ENCODE measurements at regions of chr2 and their contacts with region 1.

Region 1: GRCh38 chr2:72271766-72272641 is 124.3 kb upstream of the CYP26B1 start:
- DNase-seq: peak; percentile 41
- H3K4me3 Mint-ChIP-seq: no peak overlapping the region
- H3K27ac Mint-ChIP-seq: peak overlapping the region; percentile 30
- H3K4me1 Mint-ChIP-seq: peaks cover 50% of the 10 kb centered on the region
- H3K27me3 Mint-ChIP-seq: no peaks in the 10 kb centered on the region
- CTCF ChIP-seq: no peak

Region 2: GRCh38 chr2:72367530-72368225 is 95.7 kb after region 1 on chr2:
- CTCF ChIA-PET with region 1: no interaction called
- intact Hi-C with region 1: loop called (anchors 1 kb)
- DNase-seq: peak; percentile 77
- H3K4me3 Mint-ChIP-seq: no peak overlapping the region
- H3K27ac Mint-ChIP-seq: no peak overlapping the region
- H3K4me1 Mint-ChIP-seq: no peaks in the 10 kb centered on the region
- H3K27me3 Mint-ChIP-seq: no peaks in the 10 kb centered on the region
- CTCF ChIP-seq: peak; percentile 26

Region 3: DNA sequence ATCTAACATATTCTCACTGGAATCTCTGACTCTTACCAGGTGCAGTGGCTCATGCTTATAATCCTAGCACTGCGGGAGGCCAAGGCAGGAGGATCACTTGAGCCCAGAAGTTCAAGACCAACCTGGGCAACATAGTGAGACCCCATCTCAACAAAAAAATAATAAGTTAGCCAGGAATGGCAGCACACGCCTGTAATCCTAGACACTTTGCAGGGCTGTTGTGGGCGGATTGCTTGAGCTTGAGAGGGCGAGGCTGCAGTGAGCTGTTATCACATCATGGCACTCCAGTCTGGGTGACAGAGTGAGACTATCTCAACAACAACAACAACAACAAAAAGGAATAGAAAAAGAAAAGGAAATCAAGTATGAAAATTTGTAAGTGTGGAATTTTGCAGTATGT is 182.2 kb after region 1 on chr2:
- CTCF ChIA-PET with region 1: no interaction called
- intact Hi-C with region 1: no loop called
- DNase-seq: no peak
- H3K4me3 Mint-ChIP-seq: no peak overlapping the region
- H3K27ac Mint-ChIP-seq: no peak overlapping the region
- H3K4me1 Mint-ChIP-seq: no peaks in the 10 kb centered on the region
- H3K27me3 Mint-ChIP-seq: no peaks in the 10 kb centered on the region
- CTCF ChIP-seq: no peak

Measured in Calu3 (cell line).